IMR-90 (cell line): ENCODE measurements at regions of chr5 and their contacts with region 1.

Region 1: GRCh38 chr5:175383350-175383749 is 60.6 kb downstream of the DRD1 start:
- DNase-seq: no peak
- ATAC-seq: no peak
- H3K4me3 ChIP-seq: no peak overlapping the region
- H3K27ac ChIP-seq: no peak overlapping the region
- H3K4me1 ChIP-seq: peaks cover 3% of the 10 kb centered on the region
- H3K27me3 ChIP-seq: no peaks in the 10 kb centered on the region; the same call in 1 of the 2 replicates
- CTCF ChIP-seq: no peak
- POLR2A ChIP-seq: no peak
- RAD21 ChIP-seq: no peak

Region 2: DNA sequence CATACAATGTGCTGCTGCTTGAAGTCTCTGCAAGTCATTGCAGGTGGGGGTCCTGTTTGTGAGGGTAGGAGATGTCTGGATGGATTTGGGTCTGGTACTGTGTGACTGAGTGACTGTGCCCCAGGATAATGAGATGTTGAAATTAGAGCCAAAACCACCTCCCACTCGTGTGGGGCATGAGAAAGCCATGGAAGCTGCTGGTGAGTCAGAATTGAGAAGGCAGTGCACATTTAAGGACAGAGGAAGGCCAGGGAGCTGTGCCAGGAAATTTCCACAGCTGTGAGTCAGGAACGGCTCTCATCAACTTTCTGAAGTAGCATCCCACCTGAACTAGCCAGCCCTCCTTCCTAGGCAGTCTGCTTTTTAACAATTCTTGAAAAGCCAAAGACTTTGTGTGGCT is 169.2 kb before region 1 on chr5:
- CTCF ChIA-PET with region 1: no interaction called
- POLR2A ChIA-PET with region 1: no interaction called
- dilution Hi-C with region 1: no loop called
- in situ Hi-C with region 1: no loop called
- intact Hi-C with region 1: loop called (anchors 10 kb)
- DNase-seq: peak; percentile 97
- ATAC-seq: peak; percentile 84
- H3K4me3 ChIP-seq: no peak overlapping the region
- H3K27ac ChIP-seq: no peak overlapping the region
- H3K4me1 ChIP-seq: peaks cover 11% of the 10 kb centered on the region
- H3K27me3 ChIP-seq: no peaks in the 10 kb centered on the region
- CTCF ChIP-seq: no peak
- POLR2A ChIP-seq: no peak
- RAD21 ChIP-seq: no peak

Region 3: GRCh38 chr5:175417384-175417783 is 34.0 kb after region 1 on chr5:
- CTCF ChIA-PET with region 1: no interaction called
- POLR2A ChIA-PET with region 1: no interaction called
- dilution Hi-C with region 1: no loop called
- in situ Hi-C with region 1: no loop called
- intact Hi-C with region 1: no loop called
- DNase-seq: no peak
- ATAC-seq: peak; percentile 51; the same call in 1 of the 2 replicates
- H3K4me3 ChIP-seq: no peak overlapping the region
- H3K27ac ChIP-seq: no peak overlapping the region
- H3K4me1 ChIP-seq: no peaks in the 10 kb centered on the region
- H3K27me3 ChIP-seq: peaks cover 2% of the 10 kb centered on the region; the same call in 1 of the 2 replicates
- CTCF ChIP-seq: no peak
- POLR2A ChIP-seq: no peak
- RAD21 ChIP-seq: no peak

Region 4: GRCh38 chr5:175508896-175509295 is 125.5 kb after region 1 on chr5:
- CTCF ChIA-PET with region 1: no interaction called
- POLR2A ChIA-PET with region 1: no interaction called
- dilution Hi-C with region 1: no loop called
- in situ Hi-C with region 1: no loop called
- intact Hi-C with region 1: no loop called
- DNase-seq: no peak
- ATAC-seq: no peak
- H3K4me3 ChIP-seq: no peak overlapping the region
- H3K27ac ChIP-seq: no peak overlapping the region
- H3K4me1 ChIP-seq: no peaks in the 10 kb centered on the region
- H3K27me3 ChIP-seq: no peaks in the 10 kb centered on the region
- CTCF ChIP-seq: no peak
- POLR2A ChIP-seq: no peak
- RAD21 ChIP-seq: no peak